Breast epithelium (tissue), 4 donors: ENCODE measurements at regions of chr6 and their contacts with region 1.

Region 1: DNA sequence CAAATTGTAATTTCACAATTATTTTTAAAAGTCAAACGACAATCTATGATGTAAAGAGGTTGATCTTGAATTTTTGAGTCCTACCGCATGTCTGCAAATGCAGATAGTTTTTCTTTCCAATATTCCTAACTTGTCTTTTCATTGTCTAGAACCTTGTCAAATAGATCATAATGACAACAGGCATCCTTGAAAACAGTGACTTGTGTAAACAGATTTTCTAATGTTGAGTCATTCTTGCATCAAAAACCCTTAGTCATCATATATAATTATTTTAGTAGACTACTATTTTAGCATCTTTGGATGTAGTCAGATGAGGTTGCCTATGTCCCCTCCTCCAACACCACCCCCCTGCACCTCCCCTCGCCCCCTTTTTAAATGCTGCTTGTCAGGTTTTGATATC is 43.8 kb downstream of the BMP6 start:
- DNase-seq: no peak
- H3K4me3 ChIP-seq: no peak overlapping the region
- H3K27ac ChIP-seq: no peak overlapping the region
- H3K4me1 ChIP-seq: no peaks in the 10 kb centered on the region
- H3K27me3 ChIP-seq: no peaks in the 10 kb centered on the region
- CTCF ChIP-seq: no peak
- POLR2A ChIP-seq: no peak

Region 2: GRCh38 chr6:9204171-9204570 is 1434.5 kb after region 1 on chr6:
- intact Hi-C with region 1: loop called (anchors 10 kb)
- DNase-seq: peak in 1 of 2 donors; percentile 28
- H3K4me3 ChIP-seq: no peak overlapping the region
- H3K27ac ChIP-seq: no peak overlapping the region
- H3K4me1 ChIP-seq: no peaks in the 10 kb centered on the region
- H3K27me3 ChIP-seq: no peaks in the 10 kb centered on the region
- CTCF ChIP-seq: no peak
- POLR2A ChIP-seq: no peak